Vagina (tissue), 2 donors: ENCODE measurements at regions of chr5 and their contacts with region 1.

Region 1: GRCh38 chr5:141878711-141879425 is 658 bp upstream of the PCDH1 start:
- DNase-seq: peak; percentile 91 to 96
- H3K4me3 ChIP-seq: peak overlapping the region; percentile 59 to 64
- H3K27ac ChIP-seq: peak overlapping the region; percentile 61
- H3K4me1 ChIP-seq: peaks cover 30% of the 10 kb centered on the region
- H3K27me3 ChIP-seq: peaks cover 23% of the 10 kb centered on the region
- CTCF ChIP-seq: peak; percentile 71 to 91 (median 85)
- POLR2A ChIP-seq: no peak

Region 2: GRCh38 chr5:141701360-141702119 is 177.3 kb before region 1 on chr5:
- intact Hi-C with region 1: loop called (anchors 1 kb)
- DNase-seq: no peak
- H3K4me3 ChIP-seq: peak overlapping the region in 1 of 2 donors; percentile 49
- H3K27ac ChIP-seq: no peak overlapping the region
- H3K4me1 ChIP-seq: peaks cover 21% of the 10 kb centered on the region
- H3K27me3 ChIP-seq: no peaks in the 10 kb centered on the region
- CTCF ChIP-seq: no peak
- POLR2A ChIP-seq: no peak

Region 3: DNA sequence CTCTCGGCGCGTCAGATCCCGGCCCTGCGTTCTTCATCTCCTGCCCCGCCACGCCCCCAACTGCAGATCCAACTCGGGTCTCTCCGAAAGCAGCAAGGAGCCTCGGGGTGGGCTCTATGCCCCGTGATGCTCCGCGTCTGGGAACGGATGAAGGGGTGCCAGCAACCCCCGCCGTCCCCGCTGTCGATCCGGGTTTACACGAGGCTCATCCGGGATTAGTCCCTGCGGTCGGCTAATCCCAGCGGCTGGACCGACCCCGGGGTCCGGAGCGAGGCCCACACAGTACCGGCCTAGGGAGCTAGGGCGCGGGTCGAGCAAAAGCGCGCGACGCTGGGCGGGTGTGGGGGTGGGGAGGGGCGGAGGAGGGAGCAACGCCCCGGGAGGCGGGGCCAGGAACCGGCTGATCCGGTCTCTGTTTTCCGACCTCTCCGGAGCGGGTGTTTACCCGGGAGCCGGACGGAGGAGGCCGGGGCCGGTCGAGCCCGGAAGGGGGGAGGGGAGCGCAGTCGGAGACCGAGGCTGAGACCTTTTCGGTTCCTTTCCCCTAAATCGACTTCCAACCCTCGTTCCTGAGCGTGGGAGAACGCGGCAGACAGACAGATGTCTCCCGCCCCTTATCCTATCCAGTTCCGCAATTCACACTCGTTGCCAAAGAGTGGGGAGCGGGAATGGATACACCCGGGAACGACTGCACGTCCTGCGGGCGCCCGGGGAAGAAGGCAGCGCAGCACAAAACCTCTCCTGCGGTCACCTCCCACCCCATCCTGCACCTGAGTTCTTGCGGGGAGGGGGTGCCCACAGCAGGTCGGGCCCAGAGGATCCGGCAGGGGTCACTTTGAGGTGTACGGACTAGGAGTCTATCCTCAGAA is 29.3 kb before region 1 on chr5:
- intact Hi-C with region 1: no loop called
- DNase-seq: no peak
- H3K4me3 ChIP-seq: peak overlapping the region; percentile 58 to 86
- H3K27ac ChIP-seq: peak overlapping the region; percentile 99
- H3K4me1 ChIP-seq: peaks cover 34% of the 10 kb centered on the region
- H3K27me3 ChIP-seq: no peaks in the 10 kb centered on the region
- CTCF ChIP-seq: peak in 1 of 3 experiments; percentile 20
- POLR2A ChIP-seq: peak in 1 of 2 donors; percentile 58

Region 4: GRCh38 chr5:141923448-141924352 is 44.8 kb after region 1 on chr5 and contains the start of gene DELE1:
- intact Hi-C with region 1: loop called (anchors 5 kb)
- DNase-seq: peak in 1 of 2 donors; percentile 95
- H3K4me3 ChIP-seq: peak within 1 kb of the TSS; percentile 64 to 69
- H3K27ac ChIP-seq: peak within 1 kb of the TSS; percentile 95
- H3K4me1 ChIP-seq: peaks cover 32% of the 10 kb centered on the region
- H3K27me3 ChIP-seq: no peaks in the 10 kb centered on the region
- CTCF ChIP-seq: no peak
- POLR2A ChIP-seq: peak in 1 of 2 donors; percentile 62
- total RNA-seq, gene DELE1: 79.1 TPM